Sigmoid colon (tissue), 7 donors: ENCODE measurements at regions of chr9 and their contacts with region 1.

Region 1: DNA sequence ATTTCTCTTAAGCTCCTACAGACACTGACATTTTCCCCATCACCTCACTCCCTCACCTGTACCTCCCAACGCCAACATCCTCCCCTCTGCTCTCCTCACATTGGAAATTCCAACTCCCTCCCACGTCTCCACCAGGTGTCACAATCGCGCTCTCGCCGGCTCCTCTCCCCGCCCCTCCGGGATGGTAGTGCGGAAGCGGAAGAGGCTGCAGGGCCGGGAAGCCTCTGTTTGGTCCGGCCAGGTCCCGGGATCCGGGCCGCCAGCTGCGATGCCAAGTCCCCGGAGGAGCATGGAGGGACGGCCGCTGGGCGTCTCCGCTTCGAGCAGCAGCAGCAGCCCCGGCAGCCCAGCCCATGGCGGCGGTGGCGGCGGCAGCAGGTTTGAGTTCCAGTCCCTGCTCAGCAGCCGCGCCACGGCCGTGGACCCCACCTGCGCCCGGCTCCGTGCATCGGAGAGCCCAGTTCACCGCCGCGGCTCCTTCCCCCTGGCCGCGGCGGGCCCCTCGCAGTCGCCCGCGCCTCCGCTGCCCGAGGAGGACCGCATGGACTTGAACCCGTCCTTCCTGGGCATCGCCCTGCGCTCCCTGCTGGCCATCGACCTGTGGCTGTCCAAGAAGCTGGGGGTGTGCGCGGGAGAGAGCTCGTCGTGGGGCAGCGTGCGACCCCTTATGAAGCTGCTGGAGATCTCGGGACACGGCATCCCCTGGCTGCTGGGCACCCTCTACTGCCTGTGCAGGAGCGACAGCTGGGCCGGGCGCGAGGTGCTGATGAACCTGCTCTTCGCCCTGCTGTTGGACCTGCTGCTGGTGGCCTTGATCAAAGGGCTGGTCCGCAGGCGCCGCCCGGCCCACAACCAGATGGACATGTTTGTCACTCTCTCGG is at the start of gene PLPP6:
- DNase-seq: peak; percentile 93
- H3K4me3 ChIP-seq: peak within 1 kb of the TSS; percentile 85 to 98 (median 92)
- H3K27ac ChIP-seq: peak within 1 kb of the TSS; percentile 81 to 89 (median 88)
- H3K4me1 ChIP-seq: peaks cover 0 to 46% (median 18%) of the 10 kb centered on the region in 4 donors
- H3K27me3 ChIP-seq: no peaks in the 10 kb centered on the region
- CTCF ChIP-seq: peak; percentile 55 to 78 (median 58)
- EP300 ChIP-seq: no peak
- POLR2A ChIP-seq: no peak
- total RNA-seq, gene PLPP6: 3.0 to 6.9 (median 3.7) TPM

Region 2: GRCh38 chr9:4086119-4087090 is 575.9 kb before region 1 on chr9:
- intact Hi-C with region 1: no loop called
- DNase-seq: no peak
- H3K4me3 ChIP-seq: no peak overlapping the region
- H3K27ac ChIP-seq: no peak overlapping the region
- H3K4me1 ChIP-seq: peaks cover 0 to 42% (median 25%) of the 10 kb centered on the region in 4 donors
- H3K27me3 ChIP-seq: no peaks in the 10 kb centered on the region
- CTCF ChIP-seq: no peak
- EP300 ChIP-seq: no peak
- POLR2A ChIP-seq: no peak

Region 3: GRCh38 chr9:4679268-4680172 is 17.2 kb after region 1 on chr9 and contains the start of gene CDC37L1:
- intact Hi-C with region 1: loop called (anchors 1 kb)
- DNase-seq: peak; percentile 99
- H3K4me3 ChIP-seq: peak within 1 kb of the TSS; percentile 69 to 96 (median 82)
- H3K27ac ChIP-seq: peak within 1 kb of the TSS; percentile 93 to 99 (median 98)
- H3K4me1 ChIP-seq: peaks cover 0 to 40% (median 21%) of the 10 kb centered on the region in 4 donors
- H3K27me3 ChIP-seq: no peaks in the 10 kb centered on the region
- CTCF ChIP-seq: peak; percentile 70 to 82 (median 76)
- EP300 ChIP-seq: peak in 2 of 4 donors; percentile 34 to 64
- POLR2A ChIP-seq: peak; percentile 95 to 96
- total RNA-seq, gene CDC37L1: 30.7 to 40.6 (median 33.3) TPM